ENCODE measurements at regions of chr15 and their contacts with region 1.

Region 1: DNA sequence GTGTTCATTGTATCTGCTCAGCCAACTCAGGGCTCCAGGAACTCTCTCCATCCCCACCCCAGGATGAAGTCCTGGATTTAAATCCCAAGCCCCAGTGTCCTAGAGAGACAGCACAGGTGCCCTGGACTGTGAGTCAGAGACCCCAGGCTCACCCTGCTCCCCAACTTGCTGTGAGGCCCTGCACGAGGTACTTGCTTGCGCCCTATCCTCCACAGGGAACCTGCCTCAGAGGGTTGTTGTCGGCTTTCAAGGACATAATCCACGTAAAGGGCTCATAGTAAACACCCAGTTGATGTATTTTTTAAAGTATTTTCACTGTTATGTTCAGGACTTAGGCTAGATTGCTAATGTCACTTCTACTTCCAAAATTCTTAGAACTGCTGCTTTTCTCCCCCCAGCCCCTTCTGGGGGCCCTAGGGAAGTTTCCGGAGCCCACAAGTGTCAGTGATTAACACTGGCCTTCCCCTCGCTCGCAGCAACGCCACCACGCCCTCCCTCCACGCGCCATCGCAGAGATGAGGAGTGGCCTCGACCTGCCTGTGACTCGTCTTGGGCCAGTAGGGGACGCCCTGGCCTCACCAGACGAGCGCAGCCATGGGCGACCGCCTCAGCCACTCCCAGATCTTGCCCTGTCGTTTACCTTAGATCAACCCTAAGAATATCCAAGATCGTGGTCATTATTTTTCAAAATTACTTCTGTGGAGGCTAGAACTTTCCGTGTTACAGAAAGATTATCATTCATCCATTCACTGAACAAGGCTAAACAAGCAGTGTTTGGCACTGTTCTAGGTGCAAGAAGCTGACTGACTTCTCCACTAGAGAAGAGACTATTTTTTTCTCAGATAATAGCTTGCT is 6.0 kb upstream of the SRP14 start:
- DNase-seq: peak; percentile 87
- CTCF ChIP-seq: peak; percentile 99

Region 2: DNA sequence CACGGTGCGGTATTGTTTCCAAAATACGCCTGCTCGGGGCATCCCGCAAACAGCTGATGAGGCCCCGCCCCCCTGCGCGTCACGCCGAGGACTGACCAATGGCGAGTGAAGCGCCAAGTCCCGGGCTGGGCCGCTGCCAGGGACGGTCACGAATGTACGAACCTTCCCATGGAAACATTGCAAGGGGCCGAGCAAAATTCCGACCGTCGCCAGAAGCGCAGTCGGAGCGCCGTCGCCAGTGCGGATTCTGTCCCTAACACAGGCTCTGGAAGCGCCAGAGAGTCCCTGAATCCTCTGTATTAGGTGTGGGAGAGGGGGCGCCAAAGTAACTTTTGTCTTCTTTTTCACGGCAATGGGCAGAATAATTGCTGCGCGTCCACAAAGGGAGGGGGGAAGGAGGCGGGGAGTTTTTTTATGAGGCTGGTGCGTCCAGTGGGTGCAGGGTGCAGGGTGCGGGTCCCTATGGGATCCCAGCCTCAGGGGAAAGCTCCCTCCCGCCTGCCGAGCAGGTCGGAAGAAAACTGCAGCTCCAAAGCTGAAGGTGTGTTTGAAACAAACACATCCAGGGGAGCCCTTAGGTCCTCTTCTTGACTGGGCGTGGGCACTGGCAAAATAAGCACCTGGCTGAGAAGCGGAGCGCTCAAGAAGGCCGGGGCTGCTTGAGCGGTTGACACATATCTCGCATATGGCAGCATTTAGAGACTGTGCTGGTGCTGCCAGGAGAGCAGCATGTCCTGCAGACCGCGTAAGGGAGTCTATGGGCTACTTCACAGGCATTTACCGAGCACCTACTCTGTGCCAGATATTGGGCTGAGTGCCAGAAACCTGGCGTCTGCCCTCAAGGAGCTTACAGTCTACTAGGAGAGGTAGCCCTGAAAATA is 64.2 kb after region 1 on chr15 and contains the start of gene BMF:
- in situ Hi-C with region 1: loop called (anchors 5 kb)
- DNase-seq: peak; percentile 98
- CTCF ChIP-seq: peak; percentile 21

Region 3: DNA sequence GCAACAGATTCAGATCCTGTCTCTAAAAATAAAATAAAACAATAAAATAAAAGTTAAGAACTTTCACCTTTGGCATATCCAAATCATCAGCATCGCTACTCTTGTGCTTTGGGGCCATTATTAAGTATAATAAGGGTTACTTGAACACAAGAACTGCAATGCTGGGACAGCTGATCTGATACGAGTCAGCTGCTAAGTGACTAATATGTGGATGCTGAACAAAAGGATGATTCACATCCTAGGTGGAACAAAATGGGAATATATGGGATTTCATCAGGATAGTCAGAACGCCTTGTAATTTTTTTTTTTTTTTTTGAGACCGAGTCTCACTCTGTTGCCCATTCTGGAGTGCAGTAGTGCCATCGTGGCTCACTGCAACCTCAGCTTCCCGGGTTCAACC is 145.6 kb after region 1 on chr15:
- in situ Hi-C with region 1: loop called (anchors 10 kb)
- DNase-seq: no peak
- CTCF ChIP-seq: no peak

Region 4: GRCh38 chr15:40274350-40275274 is 229.7 kb after region 1 on chr15:
- in situ Hi-C with region 1: loop called (anchors 10 kb)
- DNase-seq: peak; percentile 90
- CTCF ChIP-seq: peak; percentile 100

Region 5: GRCh38 chr15:40405501-40406381 is 360.8 kb after region 1 on chr15 and contains the start of gene IVD:
- in situ Hi-C with region 1: loop called (anchors 25 kb)
- DNase-seq: peak; percentile 98
- CTCF ChIP-seq: no peak

Region 6: GRCh38 chr15:40525855-40526254 is 480.9 kb after region 1 on chr15:
- in situ Hi-C with region 1: no loop called
- DNase-seq: no peak
- CTCF ChIP-seq: no peak

Region 7: DNA sequence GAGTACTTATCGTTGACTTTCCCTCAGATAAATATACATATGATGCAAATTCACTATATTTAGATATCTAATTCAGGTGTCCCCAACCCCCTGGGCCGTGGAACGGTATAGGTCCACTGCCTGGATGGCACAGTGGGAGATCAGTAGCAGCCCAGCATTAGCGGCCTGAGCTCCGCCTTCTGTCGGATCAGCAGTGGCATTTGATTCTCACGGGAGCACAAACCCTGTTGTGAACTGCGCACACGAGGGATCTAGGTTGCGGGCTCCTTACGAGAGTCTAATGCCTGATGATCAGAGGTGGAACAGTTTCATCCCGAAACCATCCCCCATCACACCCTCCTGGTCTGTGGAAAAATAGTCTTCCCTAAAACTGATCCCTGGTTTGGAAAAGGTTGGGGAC is 556.0 kb after region 1 on chr15:
- in situ Hi-C with region 1: no loop called
- DNase-seq: no peak
- CTCF ChIP-seq: no peak

Measured in GM13977 (cell line).